ENCODE measurements at regions of chrX and their contacts with region 1.

Region 1: GRCh38 chrX:119398974-119399771 is at the start of gene SLC25A43:
- DNase-seq: peak; percentile 76
- H3K4me3 ChIP-seq: peak within 1 kb of the TSS; percentile 44 to 73 (median 67)
- H3K27ac ChIP-seq: peak within 1 kb of the TSS; percentile 81 to 90 (median 82)
- H3K4me1 ChIP-seq: peaks cover 0 to 8% (median 0%) of the 10 kb centered on the region in 4 donors
- H3K27me3 ChIP-seq: no peaks in the 10 kb centered on the region
- CTCF ChIP-seq: no peak
- EP300 ChIP-seq: no peak
- POLR2A ChIP-seq: no peak
- total RNA-seq, gene SLC25A43: 5.3 to 16.1 (median 9.7) TPM

Region 2: GRCh38 chrX:119235872-119236622 is 163.1 kb before region 1 on chrX and contains the start of gene PGRMC1:
- intact Hi-C with region 1: loop called (anchors 5 kb)
- DNase-seq: peak; percentile 91
- H3K4me3 ChIP-seq: peak within 1 kb of the TSS; percentile 66 to 81 (median 72)
- H3K27ac ChIP-seq: peak within 1 kb of the TSS; percentile 81 to 90 (median 88)
- H3K4me1 ChIP-seq: peaks cover 0 to 14% (median 5%) of the 10 kb centered on the region in 4 donors
- H3K27me3 ChIP-seq: no peaks in the 10 kb centered on the region
- CTCF ChIP-seq: no peak
- EP300 ChIP-seq: no peak
- POLR2A ChIP-seq: peak; percentile 71 to 75
- total RNA-seq, gene PGRMC1: 104 to 159 (median 132) TPM

Region 3: DNA sequence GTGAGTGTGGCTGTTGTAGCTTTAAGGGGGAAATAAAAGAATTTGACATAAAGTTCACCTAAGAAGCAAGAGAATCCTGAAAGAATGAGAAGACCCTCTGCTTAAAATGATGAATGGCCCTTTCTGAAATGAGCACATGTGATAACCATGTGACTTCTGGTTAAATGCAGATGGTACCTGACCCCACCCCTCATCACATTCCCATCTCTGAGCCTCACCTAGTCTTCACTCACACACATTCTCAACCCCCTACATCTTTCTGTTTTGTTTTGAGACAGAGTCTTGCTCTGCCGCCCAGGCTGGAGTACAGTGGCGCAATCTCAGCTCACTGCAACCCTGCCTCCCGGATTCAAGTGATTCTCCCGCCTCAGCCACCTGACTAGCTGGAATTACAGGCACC is 262.3 kb after region 1 on chrX:
- intact Hi-C with region 1: no loop called
- DNase-seq: no peak
- H3K4me3 ChIP-seq: no peak overlapping the region
- H3K27ac ChIP-seq: no peak overlapping the region
- H3K4me1 ChIP-seq: no peaks in the 10 kb centered on the region
- H3K27me3 ChIP-seq: no peaks in the 10 kb centered on the region
- CTCF ChIP-seq: no peak
- EP300 ChIP-seq: no peak
- POLR2A ChIP-seq: no peak